ENCODE measurements at regions of chr1 and their contacts with region 1.

Region 1: GRCh38 chr1:47710329-47711071 is 272.7 kb downstream of the FOXD2 start:
- DNase-seq: peak; percentile 92

Region 2: GRCh38 chr1:47432071-47433036 is 278.1 kb before region 1 on chr1:
- intact Hi-C with region 1: loop called (anchors 2 kb)
- DNase-seq: peak; percentile 93

Region 3: DNA sequence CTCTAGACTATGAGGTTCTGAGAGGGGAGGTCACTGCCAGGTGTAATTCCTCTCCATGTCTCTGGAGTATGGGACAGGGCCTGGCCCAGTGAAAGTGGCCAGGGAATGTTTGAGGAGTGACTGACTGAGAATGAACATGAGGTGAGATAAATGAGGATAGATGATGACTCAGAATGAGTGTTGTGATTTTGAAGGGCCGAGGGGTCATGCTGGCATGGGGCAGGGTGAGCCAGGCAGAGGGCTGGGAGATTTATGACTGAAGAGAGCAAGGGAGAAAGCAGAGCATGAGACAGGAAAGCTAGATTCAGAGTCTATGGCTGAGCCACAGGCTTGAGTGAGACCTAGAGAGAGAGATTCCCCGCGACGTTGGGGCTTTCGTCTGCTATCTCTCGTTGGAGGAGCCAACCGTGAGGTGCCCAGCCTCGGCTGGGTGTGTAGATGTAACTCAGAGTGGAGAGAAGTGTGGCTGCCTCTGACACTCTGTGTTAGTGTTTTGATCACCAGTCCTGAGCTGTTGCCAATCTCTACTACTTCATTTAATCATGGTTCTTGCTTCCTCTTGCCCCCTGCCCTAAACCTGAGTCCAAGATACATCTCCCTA is 222.6 kb before region 1 on chr1:
- intact Hi-C with region 1: no loop called
- DNase-seq: no peak

Region 4: GRCh38 chr1:47507881-47508701 is 202.4 kb before region 1 on chr1:
- intact Hi-C with region 1: loop called in 1 of 2 experiments (anchors 10 kb)
- DNase-seq: peak; percentile 84

Measured in posterior vena cava (tissue), 2 donors.